Dendritic cell treated with granulocyte-macrophage colony-stimulating factor and Interleukin-4, amounts not matched to agents 40 ng/mL and 50 ng/mL, for 4 days (primary cell): ENCODE measurements at regions of chrX and their contacts with region 1.

Region 1: GRCh38 chrX:133792198-133792953 is 193.0 kb downstream of the GPC3 start:
- H3K4me3 Mint-ChIP-seq: no peak overlapping the region
- H3K27ac Mint-ChIP-seq: no peak overlapping the region
- H3K4me1 Mint-ChIP-seq: no peaks in the 10 kb centered on the region
- H3K27me3 Mint-ChIP-seq: no peaks in the 10 kb centered on the region

Region 2: GRCh38 chrX:133608406-133608805 is 184.0 kb before region 1 on chrX:
- intact Hi-C with region 1: no loop called
- H3K4me3 Mint-ChIP-seq: no peak overlapping the region
- H3K27ac Mint-ChIP-seq: no peak overlapping the region
- H3K4me1 Mint-ChIP-seq: peaks cover 8% of the 10 kb centered on the region
- H3K27me3 Mint-ChIP-seq: peaks cover 2% of the 10 kb centered on the region

Region 3: DNA sequence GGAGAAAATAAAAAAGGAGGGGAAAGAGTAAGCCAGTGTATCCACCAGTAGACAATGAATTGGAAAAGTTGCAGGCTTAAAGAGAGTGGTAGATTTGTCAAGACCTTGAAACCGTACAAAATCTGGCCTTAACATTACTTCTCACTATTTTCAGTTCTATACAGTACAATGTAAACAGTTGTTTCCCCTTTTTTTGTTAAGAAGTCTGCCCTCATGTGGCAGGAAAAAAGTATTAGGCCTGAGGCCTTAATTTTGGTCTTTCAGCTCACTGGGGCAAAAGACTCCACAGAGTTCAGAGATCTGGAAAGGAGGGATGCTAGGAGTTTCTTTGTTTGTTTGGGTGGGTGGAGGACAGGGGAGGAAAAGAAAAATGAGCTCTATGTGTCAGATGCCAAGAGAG is 351.9 kb after region 1 on chrX:
- intact Hi-C with region 1: loop called (anchors 2 kb)
- H3K4me3 Mint-ChIP-seq: no peak overlapping the region
- H3K27ac Mint-ChIP-seq: no peak overlapping the region
- H3K4me1 Mint-ChIP-seq: no peaks in the 10 kb centered on the region
- H3K27me3 Mint-ChIP-seq: no peaks in the 10 kb centered on the region